PC-3 (cell line): ENCODE measurements at regions of chr1 and their contacts with region 1.

Region 1: GRCh38 chr1:218499011-218499691 is 154.0 kb downstream of the TGFB2 start:
- DNase-seq: peak; percentile 83
- ATAC-seq: peak; percentile 29
- H3K4me3 ChIP-seq: peak overlapping the region; percentile 51
- H3K27ac ChIP-seq: peak overlapping the region; percentile 74
- H3K4me1 ChIP-seq: peaks cover 47% of the 10 kb centered on the region
- H3K27me3 ChIP-seq: no peaks in the 10 kb centered on the region
- CTCF ChIP-seq: no peak

Region 2: GRCh38 chr1:218421531-218421930 is 77.6 kb before region 1 on chr1:
- CTCF ChIA-PET with region 1: no interaction called
- POLR2A ChIA-PET with region 1: no interaction called
- intact Hi-C with region 1: no loop called
- DNase-seq: peak; percentile 70
- ATAC-seq: peak; percentile 16
- H3K4me3 ChIP-seq: no peak overlapping the region
- H3K27ac ChIP-seq: peak overlapping the region; percentile 15; the same call in 1 of the 2 replicates
- H3K4me1 ChIP-seq: peaks cover 42% of the 10 kb centered on the region
- H3K27me3 ChIP-seq: no peaks in the 10 kb centered on the region
- CTCF ChIP-seq: no peak

Region 3: DNA sequence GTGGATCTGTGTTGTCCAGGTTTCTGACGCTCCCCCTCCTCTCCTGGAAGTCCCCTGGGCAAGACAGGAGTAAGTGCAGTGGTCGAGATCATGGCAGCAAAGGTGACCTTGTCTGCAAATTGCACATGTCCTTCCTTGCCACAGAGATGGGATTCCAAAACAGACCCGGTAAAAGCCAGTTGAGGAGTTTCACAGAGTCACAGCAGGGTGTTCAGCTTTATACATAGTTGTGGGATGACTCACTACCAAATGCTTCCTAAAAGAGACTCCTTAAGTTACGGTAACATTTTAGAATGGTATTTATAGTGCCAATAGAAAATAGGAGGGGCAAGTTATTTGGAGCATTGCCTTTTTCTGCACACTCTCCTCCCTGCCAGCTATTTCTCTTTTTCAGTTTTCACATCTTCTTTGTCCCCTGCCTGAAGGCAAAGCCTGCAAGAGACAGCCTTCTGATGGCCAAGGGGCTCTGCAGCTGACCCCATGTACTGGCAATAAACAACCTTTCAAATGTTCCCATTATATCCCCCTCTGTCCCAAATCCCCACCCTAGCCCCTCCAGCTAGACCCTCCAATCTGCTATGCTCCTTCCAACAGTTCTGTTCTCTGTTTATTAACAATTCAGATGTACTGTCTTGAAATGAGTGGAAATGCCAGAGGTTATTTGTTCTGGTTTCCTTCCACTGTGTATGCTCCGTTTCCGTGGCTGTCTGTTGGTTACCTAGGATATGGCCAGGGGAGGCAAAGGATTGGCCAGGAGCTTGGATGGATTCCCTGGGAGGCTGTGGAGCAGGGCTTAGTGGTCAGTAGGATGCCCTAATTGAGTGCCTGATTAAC is 39.1 kb before region 1 on chr1:
- CTCF ChIA-PET with region 1: interaction called, 3 read pairs
- POLR2A ChIA-PET with region 1: interaction called, 3 read pairs
- intact Hi-C with region 1: loop called (anchors 1 kb)
- DNase-seq: peak; percentile 99
- ATAC-seq: peak; percentile 95
- H3K4me3 ChIP-seq: peak overlapping the region; percentile 31
- H3K27ac ChIP-seq: peak overlapping the region; percentile 56
- H3K4me1 ChIP-seq: peaks cover 38% of the 10 kb centered on the region
- H3K27me3 ChIP-seq: no peaks in the 10 kb centered on the region
- CTCF ChIP-seq: no peak

Region 4: DNA sequence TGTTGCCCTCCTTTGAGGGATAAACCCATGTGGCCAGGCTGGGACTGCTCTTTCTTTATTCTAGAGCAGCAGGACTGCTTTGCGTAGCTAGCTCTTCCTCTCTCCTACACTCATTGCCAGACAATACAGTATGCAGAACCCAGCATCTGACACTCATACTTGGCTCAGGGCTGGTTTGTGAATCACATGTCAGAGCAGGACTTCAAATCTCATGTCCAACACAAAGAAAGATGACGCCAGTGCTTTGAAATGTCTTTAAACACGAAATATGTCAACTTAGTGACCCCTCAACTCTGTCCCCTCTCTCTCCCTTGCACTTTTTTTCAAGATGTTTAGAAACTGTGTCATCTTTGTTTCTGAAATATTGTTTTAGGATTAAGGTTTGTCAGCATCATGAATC is 19.0 kb before region 1 on chr1:
- CTCF ChIA-PET with region 1: interaction called, 3 read pairs
- POLR2A ChIA-PET with region 1: interaction called, 4 read pairs
- intact Hi-C with region 1: loop called (anchors 1 kb)
- DNase-seq: peak; percentile 83
- ATAC-seq: no peak
- H3K4me3 ChIP-seq: no peak overlapping the region
- H3K27ac ChIP-seq: peak overlapping the region; percentile 74
- H3K4me1 ChIP-seq: peaks cover 57% of the 10 kb centered on the region
- H3K27me3 ChIP-seq: no peaks in the 10 kb centered on the region
- CTCF ChIP-seq: no peak

Region 5: DNA sequence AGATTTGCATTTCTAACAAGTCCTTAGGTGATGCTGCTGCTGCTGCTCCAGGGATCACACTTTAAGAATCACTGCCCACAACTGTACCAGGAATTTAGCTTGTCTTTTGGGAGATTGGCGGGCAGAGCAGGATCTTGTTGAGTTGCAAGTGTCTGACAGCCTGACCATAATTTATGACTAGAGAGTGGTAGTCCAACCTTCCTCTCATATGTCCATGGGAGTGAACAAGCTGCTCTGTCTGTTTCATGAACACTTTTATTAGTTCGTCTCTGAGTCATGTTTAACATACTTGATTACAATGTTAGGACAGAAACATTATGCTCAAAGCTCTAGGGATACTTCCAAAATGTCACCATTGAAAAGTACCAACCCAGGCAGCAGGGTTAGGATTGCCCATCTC is 15.5 kb after region 1 on chr1:
- CTCF ChIA-PET with region 1: interaction called, 9 read pairs
- POLR2A ChIA-PET with region 1: interaction called, 4 read pairs
- intact Hi-C with region 1: loop called (anchors 1 kb)
- DNase-seq: peak; percentile 73
- ATAC-seq: peak; percentile 93
- H3K4me3 ChIP-seq: no peak overlapping the region
- H3K27ac ChIP-seq: no peak overlapping the region
- H3K4me1 ChIP-seq: peaks cover 6% of the 10 kb centered on the region
- H3K27me3 ChIP-seq: no peaks in the 10 kb centered on the region
- CTCF ChIP-seq: no peak

Region 6: GRCh38 chr1:218665221-218665620 is 166.1 kb after region 1 on chr1:
- CTCF ChIA-PET with region 1: no interaction called
- POLR2A ChIA-PET with region 1: no interaction called
- intact Hi-C with region 1: loop called (anchors 10 kb)
- DNase-seq: peak; percentile 48
- ATAC-seq: peak; percentile 54
- H3K4me3 ChIP-seq: peak overlapping the region; percentile 28; the same call in 1 of the 2 replicates
- H3K27ac ChIP-seq: peak overlapping the region; percentile 51
- H3K4me1 ChIP-seq: peaks cover 32% of the 10 kb centered on the region
- H3K27me3 ChIP-seq: no peaks in the 10 kb centered on the region
- CTCF ChIP-seq: no peak

Region 7: DNA sequence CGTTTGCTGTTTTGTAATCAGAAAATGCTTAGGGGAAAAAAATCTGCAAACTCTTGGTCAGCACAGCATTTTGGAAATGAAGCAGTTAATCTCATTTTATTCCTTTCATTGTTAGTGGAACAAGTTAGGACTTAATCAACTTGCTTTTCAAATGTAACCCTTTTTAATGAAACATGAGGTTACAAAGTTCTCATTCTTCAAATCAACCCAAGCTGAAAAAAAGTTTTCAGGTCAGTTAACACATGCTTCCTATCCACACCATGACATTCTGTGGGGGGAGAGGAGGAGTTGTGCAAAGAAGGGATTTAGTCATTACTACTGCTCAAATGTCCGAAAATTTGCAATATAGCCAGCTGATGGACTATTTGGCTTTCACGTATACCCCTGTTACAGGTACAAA is 391.3 kb after region 1 on chr1:
- CTCF ChIA-PET with region 1: no interaction called
- POLR2A ChIA-PET with region 1: no interaction called
- intact Hi-C with region 1: loop called (anchors 10 kb)
- DNase-seq: no peak
- ATAC-seq: no peak
- H3K4me3 ChIP-seq: no peak overlapping the region
- H3K27ac ChIP-seq: no peak overlapping the region
- H3K4me1 ChIP-seq: peaks cover 54% of the 10 kb centered on the region
- H3K27me3 ChIP-seq: no peaks in the 10 kb centered on the region
- CTCF ChIP-seq: no peak

Region 8: DNA sequence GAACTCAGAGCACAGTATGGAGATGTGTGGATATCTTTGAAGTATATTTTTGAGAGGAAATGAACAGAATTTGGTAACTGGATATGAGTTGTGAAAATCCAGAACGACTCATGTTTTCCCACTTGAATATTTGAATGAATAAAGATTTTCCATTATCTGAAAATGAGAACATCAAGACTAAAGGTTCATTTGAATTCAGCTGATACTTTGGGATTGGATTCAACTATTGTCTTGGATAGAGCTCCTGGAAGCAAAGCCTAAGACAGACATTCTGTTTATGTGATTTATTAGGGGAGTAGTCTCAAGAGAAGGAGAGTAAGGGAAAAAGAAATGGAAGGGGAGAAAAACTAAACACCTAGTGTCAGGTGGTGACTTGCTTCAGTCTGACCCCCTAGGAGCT is 418.5 kb after region 1 on chr1:
- CTCF ChIA-PET with region 1: no interaction called
- POLR2A ChIA-PET with region 1: no interaction called
- intact Hi-C with region 1: no loop called
- DNase-seq: no peak
- ATAC-seq: no peak
- H3K4me3 ChIP-seq: no peak overlapping the region
- H3K27ac ChIP-seq: no peak overlapping the region
- H3K4me1 ChIP-seq: no peaks in the 10 kb centered on the region
- H3K27me3 ChIP-seq: no peaks in the 10 kb centered on the region
- CTCF ChIP-seq: no peak